Activated CD4-positive, alpha-beta memory T cell treated with anti-CD3 and anti-CD28 coated beads for 36 hours (primary cell): ENCODE measurements at regions of chr10 and their contacts with region 1.

Region 1: GRCh38 chr10:73743905-73744663 is at the start of gene SEC24C:
- DNase-seq: peak; percentile 98
- H3K4me3 Mint-ChIP-seq: peak within 1 kb of the TSS; percentile 99
- H3K27ac Mint-ChIP-seq: peak within 1 kb of the TSS; percentile 100
- H3K4me1 Mint-ChIP-seq: peaks cover 42% of the 10 kb centered on the region
- H3K27me3 Mint-ChIP-seq: no peaks in the 10 kb centered on the region
- total RNA-seq, gene SEC24C: 88.3 to 90.7 TPM

Region 2: GRCh38 chr10:73495884-73496674 is 248.0 kb before region 1 on chr10 and contains the start of gene PPP3CB:
- CTCF ChIA-PET with region 1: no interaction called
- POLR2A ChIA-PET with region 1: no interaction called
- intact Hi-C with region 1: loop called (anchors 1 kb)
- DNase-seq: peak; percentile 96
- H3K4me3 Mint-ChIP-seq: peak within 1 kb of the TSS; percentile 86
- H3K27ac Mint-ChIP-seq: peak within 1 kb of the TSS; percentile 91
- H3K4me1 Mint-ChIP-seq: peaks cover 42% of the 10 kb centered on the region
- H3K27me3 Mint-ChIP-seq: no peaks in the 10 kb centered on the region
- total RNA-seq, gene PPP3CB: 48.4 to 50.2 TPM

Region 3: GRCh38 chr10:73730153-73730906 is 13.8 kb before region 1 on chr10:
- CTCF ChIA-PET with region 1: interaction called, 7 read pairs
- POLR2A ChIA-PET with region 1: interaction called, 26 read pairs
- intact Hi-C with region 1: loop called (anchors 1 kb)
- DNase-seq: peak; percentile 96
- H3K4me3 Mint-ChIP-seq: peak overlapping the region; percentile 99
- H3K27ac Mint-ChIP-seq: peak overlapping the region; percentile 99
- H3K4me1 Mint-ChIP-seq: peaks cover 11% of the 10 kb centered on the region
- H3K27me3 Mint-ChIP-seq: no peaks in the 10 kb centered on the region

Region 4: GRCh38 chr10:73759512-73760115 is 15.5 kb after region 1 on chr10:
- CTCF ChIA-PET with region 1: interaction called, 3 read pairs
- POLR2A ChIA-PET with region 1: interaction called, 3 read pairs
- intact Hi-C with region 1: loop called (anchors 1 kb)
- DNase-seq: peak; percentile 67
- H3K4me3 Mint-ChIP-seq: no peak overlapping the region
- H3K27ac Mint-ChIP-seq: peak overlapping the region; percentile 82
- H3K4me1 Mint-ChIP-seq: peaks cover 65% of the 10 kb centered on the region
- H3K27me3 Mint-ChIP-seq: no peaks in the 10 kb centered on the region

Region 5: GRCh38 chr10:73772280-73773151 is 28.4 kb after region 1 on chr10:
- CTCF ChIA-PET with region 1: interaction called, 5 read pairs
- POLR2A ChIA-PET with region 1: interaction called, 44 read pairs
- intact Hi-C with region 1: loop called (anchors 1 kb)
- DNase-seq: peak; percentile 86
- H3K4me3 Mint-ChIP-seq: peak overlapping the region; percentile 95
- H3K27ac Mint-ChIP-seq: peak overlapping the region; percentile 88
- H3K4me1 Mint-ChIP-seq: peaks cover 55% of the 10 kb centered on the region
- H3K27me3 Mint-ChIP-seq: no peaks in the 10 kb centered on the region

Region 6: GRCh38 chr10:73785221-73785720 is 41.2 kb after region 1 on chr10 and contains the start of gene ZSWIM8:
- CTCF ChIA-PET with region 1: interaction called, 4 read pairs
- POLR2A ChIA-PET with region 1: interaction called, 11 read pairs
- intact Hi-C with region 1: loop called (anchors 1 kb)
- DNase-seq: peak; percentile 90
- H3K4me3 Mint-ChIP-seq: peak within 1 kb of the TSS; percentile 98
- H3K27ac Mint-ChIP-seq: peak within 1 kb of the TSS; percentile 96
- H3K4me1 Mint-ChIP-seq: peaks cover 40% of the 10 kb centered on the region
- H3K27me3 Mint-ChIP-seq: no peaks in the 10 kb centered on the region
- total RNA-seq, gene ZSWIM8: 45.1 to 46.2 TPM

Region 7: DNA sequence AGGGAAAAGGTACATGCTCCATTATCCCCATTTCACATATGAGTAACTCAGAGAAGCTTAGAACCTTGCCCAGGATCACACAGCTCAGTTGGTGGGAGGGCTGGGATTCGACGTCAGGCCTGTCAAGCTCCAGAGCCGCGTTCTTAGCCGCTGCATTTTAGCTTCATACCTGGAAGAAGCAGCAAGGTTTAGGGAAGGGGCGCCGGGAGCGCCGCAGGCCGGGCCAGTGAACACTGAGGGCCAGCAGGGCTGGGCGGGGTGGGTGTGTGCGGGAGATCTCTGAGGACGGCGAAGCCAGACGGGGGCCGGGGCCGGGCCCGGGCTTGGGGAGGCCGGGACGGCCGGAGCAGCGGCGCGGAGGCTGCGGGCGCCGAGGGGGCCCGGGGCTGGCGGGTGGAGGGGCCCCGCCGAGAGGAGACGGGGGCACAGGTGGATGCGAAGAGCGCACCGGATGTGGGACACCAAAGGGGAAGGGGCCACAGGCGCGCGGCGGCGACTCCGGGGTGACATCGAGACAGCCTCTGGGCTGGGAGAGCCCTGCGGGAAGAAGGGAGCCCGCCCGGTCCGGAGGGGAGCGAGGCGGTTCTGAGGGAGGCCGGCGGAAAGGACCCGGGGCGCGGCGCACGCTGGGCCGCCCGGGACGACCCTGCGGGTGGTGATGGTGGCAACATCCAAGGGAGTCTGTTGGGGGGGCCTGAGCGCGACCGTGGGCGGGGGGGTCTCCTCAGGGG is 66.8 kb after region 1 on chr10:
- CTCF ChIA-PET with region 1: interaction called, 3 read pairs
- POLR2A ChIA-PET with region 1: interaction called, 11 read pairs
- intact Hi-C with region 1: no loop called
- DNase-seq: peak; percentile 68
- H3K4me3 Mint-ChIP-seq: peak overlapping the region; percentile 85
- H3K27ac Mint-ChIP-seq: peak overlapping the region; percentile 95
- H3K4me1 Mint-ChIP-seq: peaks cover 41% of the 10 kb centered on the region
- H3K27me3 Mint-ChIP-seq: no peaks in the 10 kb centered on the region